ENCODE measurements at regions of chr20 and their contacts with region 1.

Region 1: DNA sequence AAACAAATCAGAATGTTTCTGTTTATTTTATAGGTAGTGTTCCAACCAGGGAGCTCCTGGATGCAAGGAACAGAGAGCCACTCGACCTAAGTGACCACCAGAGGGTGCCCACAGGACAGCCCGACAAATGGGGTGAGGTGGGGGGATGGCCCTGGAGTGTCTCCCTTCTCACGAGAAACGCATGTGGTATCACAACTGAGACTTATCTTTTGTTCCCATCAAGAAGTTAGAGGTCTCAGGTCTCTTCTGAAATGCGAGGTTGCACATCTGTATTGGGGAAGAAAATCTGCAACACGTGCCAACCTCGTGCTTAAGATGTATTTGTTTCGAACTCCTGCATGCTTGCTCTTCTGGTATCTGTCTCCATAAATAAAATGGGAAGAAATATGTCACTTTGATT is 104.0 kb downstream of the ISM1 start:
- DNase-seq: peak; percentile 67
- H3K4me3 ChIP-seq: no peak overlapping the region
- H3K27ac ChIP-seq: no peak overlapping the region
- H3K4me1 ChIP-seq: no peaks in the 10 kb centered on the region
- H3K27me3 ChIP-seq: no peaks in the 10 kb centered on the region
- CTCF ChIP-seq: peak; percentile 66

Region 2: GRCh38 chr20:13458860-13459451 is 133.9 kb after region 1 on chr20:
- CTCF ChIA-PET with region 1: no interaction called
- POLR2A ChIA-PET with region 1: no interaction called
- intact Hi-C with region 1: loop called (anchors 10 kb)
- DNase-seq: peak; percentile 63
- H3K4me3 ChIP-seq: no peak overlapping the region
- H3K27ac ChIP-seq: no peak overlapping the region
- H3K4me1 ChIP-seq: peaks cover 7% of the 10 kb centered on the region
- H3K27me3 ChIP-seq: no peaks in the 10 kb centered on the region
- CTCF ChIP-seq: peak; percentile 81

Region 3: DNA sequence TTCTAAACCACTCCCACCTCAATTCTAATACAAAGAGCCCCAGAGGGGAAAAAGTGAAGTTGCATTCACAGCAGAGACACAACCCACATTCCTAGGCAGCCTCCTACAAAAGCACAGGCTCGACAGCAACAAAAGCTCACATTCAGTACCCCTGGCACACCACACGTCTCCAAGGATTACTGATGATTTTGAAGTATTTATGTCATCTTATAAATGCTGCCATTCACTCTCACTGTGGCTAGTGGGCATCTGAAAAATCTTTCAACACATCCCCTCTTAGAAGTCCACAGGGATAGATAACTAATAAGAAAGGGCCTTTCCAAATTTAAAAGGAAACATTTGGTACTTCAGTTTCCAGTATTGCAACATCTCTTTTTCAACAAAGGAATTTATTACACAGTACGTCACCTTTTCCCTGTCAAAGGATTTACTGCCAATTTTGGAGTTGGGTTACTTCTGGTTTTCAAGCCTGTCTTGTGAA is 167.0 kb after region 1 on chr20:
- CTCF ChIA-PET with region 1: no interaction called
- POLR2A ChIA-PET with region 1: no interaction called
- intact Hi-C with region 1: loop called (anchors 5 kb)
- DNase-seq: peak; percentile 87
- H3K4me3 ChIP-seq: no peak overlapping the region
- H3K27ac ChIP-seq: peak overlapping the region; percentile 39
- H3K4me1 ChIP-seq: peaks cover 32% of the 10 kb centered on the region
- H3K27me3 ChIP-seq: no peaks in the 10 kb centered on the region
- CTCF ChIP-seq: no peak